Left cardiac atrium (tissue), 4 donors: ENCODE measurements at regions of chr5 and their contacts with region 1.

Region 1: DNA sequence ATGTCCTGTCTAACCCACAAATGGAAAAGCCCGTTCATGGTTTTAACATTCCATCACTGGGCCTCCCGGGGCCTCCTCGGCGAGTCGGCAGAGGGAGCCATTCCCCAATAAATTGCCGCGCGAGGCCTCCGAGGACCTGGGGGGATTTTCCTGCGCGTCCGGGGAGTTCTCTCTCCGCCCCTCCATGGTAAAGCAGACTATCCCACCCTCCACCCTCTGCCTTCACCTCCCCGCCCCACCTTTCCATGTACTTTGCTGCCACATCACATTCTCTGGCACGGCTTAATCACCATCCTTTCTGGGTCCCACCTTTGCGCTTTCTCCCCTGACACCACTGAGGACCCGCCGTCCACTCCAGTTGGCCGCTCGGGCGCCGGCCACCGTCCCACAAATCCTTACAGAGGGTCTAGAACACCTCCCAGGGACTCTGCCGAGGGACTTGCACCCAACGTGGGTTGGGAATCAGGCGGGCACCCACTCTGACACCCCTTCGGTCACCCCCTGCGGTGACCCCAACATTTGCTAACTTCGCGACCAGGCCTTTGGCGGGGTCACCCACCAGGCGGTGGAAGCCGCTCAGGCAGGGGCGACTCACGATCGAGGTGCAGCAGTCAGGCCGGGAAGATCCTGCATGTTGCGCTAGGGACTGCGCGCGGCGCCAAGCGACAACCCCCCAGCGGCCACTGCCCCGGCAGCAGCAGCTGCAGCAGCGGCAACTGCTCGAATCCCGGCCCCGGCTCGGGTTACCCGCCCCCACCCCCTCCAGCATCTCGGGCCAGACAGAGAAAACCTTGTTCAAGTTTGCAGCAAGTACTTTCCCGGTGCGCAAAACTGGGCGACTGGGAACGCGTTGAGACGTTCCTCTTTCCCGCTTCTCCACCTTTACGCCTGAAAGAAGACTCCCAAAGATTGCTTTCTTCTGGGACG is at the start of gene MEGF10:
- DNase-seq: peak; percentile 46
- ATAC-seq: peak; percentile 89 to 92
- total RNA-seq, gene MEGF10: 1.1 to 1.2 TPM

Region 2: DNA sequence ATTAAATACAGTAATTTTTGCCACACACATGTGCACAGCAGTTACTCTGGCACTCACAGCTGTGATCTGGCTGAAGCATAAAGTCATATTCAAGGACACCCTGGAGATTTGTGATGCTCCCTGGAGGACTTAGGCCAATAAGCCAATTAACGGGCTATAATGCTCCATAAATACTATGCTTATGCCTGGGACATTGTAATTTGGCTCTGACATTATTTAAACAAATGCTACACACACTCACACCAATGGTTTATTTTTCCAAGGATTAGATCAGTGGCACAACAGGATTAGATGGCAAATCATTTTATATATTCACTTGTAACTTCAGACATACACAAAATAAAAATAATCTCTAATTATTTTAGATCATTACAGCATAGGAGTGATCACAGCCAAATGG is 402.1 kb before region 1 on chr5:
- intact Hi-C with region 1: no loop called
- DNase-seq: no peak
- ATAC-seq: no peak

Region 3: DNA sequence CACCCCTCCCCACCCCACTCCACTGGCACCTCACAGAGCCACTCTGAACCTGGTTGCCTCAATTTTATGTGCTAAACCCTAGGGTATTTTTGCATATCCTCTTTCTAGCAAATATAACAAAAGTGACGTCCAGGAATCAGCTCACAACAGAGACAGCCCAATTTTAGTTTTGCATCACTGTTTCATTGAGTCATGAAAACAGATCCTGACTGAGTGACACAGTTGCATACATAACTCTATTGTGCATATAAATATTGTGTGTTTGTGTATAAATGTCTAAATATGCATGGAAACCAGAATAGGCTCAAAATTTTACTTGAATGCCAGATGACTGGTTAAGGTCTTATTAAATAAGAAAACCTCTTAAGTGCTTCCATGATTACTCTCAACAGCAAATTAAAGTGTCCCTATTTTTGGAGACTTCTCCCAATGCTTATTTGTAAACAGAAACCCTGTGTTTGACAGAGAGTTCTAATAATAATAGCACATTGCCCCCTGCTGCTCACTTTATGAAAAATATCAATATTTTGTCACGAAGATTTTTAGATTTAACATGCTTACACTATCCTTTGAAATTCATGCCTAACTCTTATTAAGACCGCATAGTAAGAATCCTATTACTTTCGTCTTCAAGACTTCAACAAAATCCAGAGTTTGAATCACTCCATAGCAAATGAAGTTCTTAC is 151.7 kb after region 1 on chr5:
- intact Hi-C with region 1: loop called (anchors 2 to 5 kb)
- DNase-seq: no peak
- ATAC-seq: no peak

Region 4: DNA sequence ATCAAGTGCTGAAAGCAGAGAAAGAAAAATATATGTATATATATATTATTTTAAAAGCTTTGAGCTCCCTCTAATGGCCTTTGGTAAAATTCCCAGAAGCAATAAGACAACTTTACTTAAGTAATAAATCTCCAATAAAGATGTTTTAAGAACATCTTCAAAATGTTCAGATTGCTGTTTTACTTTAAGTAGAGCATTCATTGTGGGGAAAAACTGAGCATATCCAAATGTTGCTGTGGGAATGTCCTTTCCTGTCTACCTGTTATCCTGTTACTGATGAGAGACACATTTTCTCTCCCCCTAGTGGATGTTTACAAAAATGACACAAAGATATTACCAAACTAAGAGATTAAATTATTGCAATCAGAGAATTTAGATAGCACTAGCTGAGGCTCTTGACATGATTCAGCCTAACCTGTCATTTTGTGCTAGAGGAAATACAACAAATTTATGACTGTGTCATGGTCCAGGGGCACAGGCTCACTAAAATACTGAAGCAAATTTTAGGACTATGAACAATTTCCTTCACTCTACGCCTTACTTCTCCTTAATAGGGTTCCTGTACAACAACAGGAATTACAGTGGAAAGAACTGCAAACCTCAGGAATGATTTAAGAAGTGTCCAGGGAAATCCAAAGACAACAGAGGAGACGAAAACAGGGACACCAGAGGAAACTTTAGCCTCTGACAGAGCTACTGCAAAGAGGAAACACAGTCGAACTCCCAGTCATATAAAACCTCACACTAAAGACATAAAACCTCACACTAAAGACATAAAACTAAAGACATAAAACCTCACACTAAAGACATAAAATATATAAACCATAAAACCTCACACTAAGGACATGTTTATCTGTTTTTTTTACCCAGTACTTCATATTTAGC is 202.8 kb after region 1 on chr5:
- intact Hi-C with region 1: loop called (anchors 5 kb)
- DNase-seq: no peak
- ATAC-seq: no peak